Mammary epithelial cell (primary cell): ENCODE measurements at regions of chr1 and their contacts with region 1.

Region 1: DNA sequence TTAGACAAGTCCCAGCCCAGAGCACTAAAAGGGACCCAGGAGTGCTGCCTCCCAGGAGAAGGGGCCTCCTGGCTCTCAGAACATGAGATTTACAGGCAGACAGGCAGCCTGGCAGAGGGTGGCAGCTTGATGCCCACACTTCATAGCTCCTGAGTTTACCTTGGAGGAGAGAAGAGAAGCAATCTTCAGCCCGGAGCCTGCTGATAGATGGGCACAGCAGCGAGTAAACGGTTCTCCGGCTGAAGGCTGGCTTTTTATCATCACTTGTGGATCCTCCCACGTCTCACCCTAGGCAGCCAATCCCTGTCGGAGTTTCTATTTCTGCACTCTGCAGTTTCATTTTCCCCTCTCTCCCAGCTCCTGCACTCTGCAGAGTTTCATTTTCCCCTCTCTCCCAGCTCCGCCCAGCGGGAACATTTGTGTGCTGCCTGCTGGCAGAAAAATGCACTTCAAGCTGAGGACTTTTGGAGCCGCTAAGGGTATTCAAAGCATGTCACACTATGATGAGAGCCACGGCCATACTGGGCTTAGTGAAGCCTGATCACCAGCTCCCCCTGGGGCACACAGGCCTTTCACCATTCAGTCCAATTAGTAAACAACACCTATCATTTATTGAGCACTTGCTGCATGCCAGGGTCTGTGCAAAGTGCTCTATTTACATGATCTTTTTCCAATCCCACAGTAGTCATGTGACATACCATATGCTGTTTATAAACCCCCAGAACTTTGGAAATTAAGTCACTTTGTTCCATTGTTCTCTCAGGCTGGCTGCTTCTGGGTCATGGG is at the start of gene IFI6:
- DNase-seq: peak; percentile 94
- H3K4me3 ChIP-seq: peak within 1 kb of the TSS; percentile 30 to 54 (median 48)
- H3K27ac ChIP-seq: no peak within 1 kb of the TSS
- H3K4me1 ChIP-seq: peaks cover 15% of the 10 kb centered on the region
- H3K27me3 ChIP-seq: no peaks in the 10 kb centered on the region
- CTCF ChIP-seq: peak; percentile 24 to 35
- total RNA-seq, gene IFI6: 6.5 to 14.7 TPM

Region 2: GRCh38 chr1:27616441-27616840 is 55.7 kb before region 1 on chr1:
- CTCF ChIA-PET with region 1: no interaction called
- dilution Hi-C with region 1: loop called (anchors 5 kb)
- in situ Hi-C with region 1: no loop called
- intact Hi-C with region 1: no loop called
- DNase-seq: no peak
- H3K4me3 ChIP-seq: no peak overlapping the region
- H3K27ac ChIP-seq: no peak overlapping the region
- H3K4me1 ChIP-seq: peaks cover 2% of the 10 kb centered on the region
- H3K27me3 ChIP-seq: no peaks in the 10 kb centered on the region
- CTCF ChIP-seq: peak in 1 of 2 donors; percentile 39

Region 3: DNA sequence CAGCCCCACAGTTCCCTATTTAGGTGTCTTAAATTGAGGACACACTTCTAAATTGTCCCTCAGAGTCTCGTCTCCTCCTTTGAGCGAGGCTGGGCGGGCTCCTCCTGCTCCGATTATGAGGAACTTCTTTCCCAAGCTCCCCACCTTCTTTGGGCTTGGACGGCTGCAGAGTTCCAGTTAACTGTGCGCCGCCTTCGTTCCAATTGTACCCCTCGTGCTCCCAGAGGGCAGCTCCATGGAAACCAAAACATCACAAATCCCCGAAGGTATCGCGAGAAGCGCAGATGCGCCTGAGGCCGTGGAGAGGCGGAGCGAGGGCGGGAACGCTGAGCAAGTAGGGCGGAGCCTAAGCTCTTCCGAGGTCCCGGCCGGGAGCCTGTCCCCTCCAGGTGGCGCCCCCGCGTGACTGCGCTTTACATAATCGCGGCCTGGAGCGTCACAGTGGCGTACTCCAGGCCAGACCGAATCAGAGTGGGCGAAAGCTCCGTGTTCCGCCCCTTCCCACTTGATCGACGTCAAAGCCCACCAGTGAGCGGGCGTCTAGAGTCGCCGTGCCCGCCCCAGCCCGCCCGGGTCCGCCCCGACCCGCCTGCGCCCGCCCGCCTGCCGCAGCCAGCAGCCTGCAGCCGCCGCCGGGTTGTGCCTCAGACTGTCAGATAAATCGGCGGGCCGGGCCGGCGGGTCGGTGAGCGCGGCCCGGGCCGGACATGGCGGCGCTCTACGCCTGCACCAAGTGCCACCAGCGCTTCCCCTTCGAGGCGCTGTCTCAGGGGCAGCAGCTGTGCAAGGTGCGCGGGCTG is 53.4 kb after region 1 on chr1 and contains the start of gene FAM76A:
- CTCF ChIA-PET with region 1: interaction called, 3 read pairs
- dilution Hi-C with region 1: no loop called
- in situ Hi-C with region 1: no loop called
- intact Hi-C with region 1: loop called (anchors 1 kb)
- DNase-seq: peak; percentile 99
- H3K4me3 ChIP-seq: peak within 1 kb of the TSS; percentile 87 to 100 (median 97)
- H3K27ac ChIP-seq: peak within 1 kb of the TSS; percentile 91
- H3K4me1 ChIP-seq: peaks cover 19% of the 10 kb centered on the region
- H3K27me3 ChIP-seq: no peaks in the 10 kb centered on the region
- CTCF ChIP-seq: peak; percentile 16 to 49
- total RNA-seq, gene FAM76A: 12.8 to 20.8 TPM

Region 4: GRCh38 chr1:27830621-27831424 is 158.7 kb after region 1 on chr1 and contains the start of gene PPP1R8:
- CTCF ChIA-PET with region 1: interaction called, 19 read pairs
- dilution Hi-C with region 1: no loop called
- in situ Hi-C with region 1: no loop called
- intact Hi-C with region 1: loop called (anchors 1 kb)
- DNase-seq: peak; percentile 94
- H3K4me3 ChIP-seq: peak within 1 kb of the TSS; percentile 79 to 95 (median 88)
- H3K27ac ChIP-seq: peak within 1 kb of the TSS; percentile 85
- H3K4me1 ChIP-seq: peaks cover 14% of the 10 kb centered on the region
- H3K27me3 ChIP-seq: no peaks in the 10 kb centered on the region
- CTCF ChIP-seq: no peak
- total RNA-seq, gene PPP1R8: 37.0 to 42.5 TPM